ENCODE measurements at regions of chr19 and their contacts with region 1.

Region 1: DNA sequence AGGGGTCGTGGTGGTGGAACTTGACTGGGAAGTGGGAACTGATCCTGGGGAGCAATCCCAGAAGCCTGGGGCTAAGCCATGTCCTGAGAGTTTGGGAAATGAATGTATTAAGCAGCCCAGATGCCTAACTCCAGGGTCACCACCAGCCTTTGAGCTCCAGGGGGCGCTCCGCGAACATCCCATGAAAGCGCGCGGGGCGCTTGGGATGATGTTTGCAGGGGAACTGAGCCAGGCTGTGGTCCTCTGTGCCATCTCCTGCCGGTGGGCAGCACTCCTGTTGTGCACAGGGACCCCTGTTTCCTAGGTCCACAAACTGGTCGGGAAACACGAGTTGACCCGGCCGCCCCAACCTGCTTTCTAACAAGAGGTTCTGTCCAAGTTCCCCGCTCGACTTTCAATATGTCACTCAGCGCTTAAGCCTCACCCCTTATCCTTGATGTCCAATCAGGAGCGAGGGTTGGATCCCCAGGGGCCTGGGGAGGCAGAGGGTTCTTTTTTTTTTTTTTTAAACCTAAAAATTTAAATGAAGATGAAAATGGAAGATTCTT is 14.4 kb downstream of the LEUTX start:
- DNase-seq: peak; percentile 73 to 78
- ATAC-seq: peak; percentile 95 to 99 (median 98)
- H3K4me3 ChIP-seq: peak overlapping the region in 9 of 10 donors; percentile 28 to 61 (median 55)
- H3K27ac ChIP-seq: no peak overlapping the region
- H3K4me1 ChIP-seq: no peaks in the 10 kb centered on the region
- H3K27me3 ChIP-seq: peaks cover 0 to 12% (median 0%) of the 10 kb centered on the region in 7 donors
- CTCF ChIP-seq: peak; percentile 79 to 97 (median 93)

Region 2: DNA sequence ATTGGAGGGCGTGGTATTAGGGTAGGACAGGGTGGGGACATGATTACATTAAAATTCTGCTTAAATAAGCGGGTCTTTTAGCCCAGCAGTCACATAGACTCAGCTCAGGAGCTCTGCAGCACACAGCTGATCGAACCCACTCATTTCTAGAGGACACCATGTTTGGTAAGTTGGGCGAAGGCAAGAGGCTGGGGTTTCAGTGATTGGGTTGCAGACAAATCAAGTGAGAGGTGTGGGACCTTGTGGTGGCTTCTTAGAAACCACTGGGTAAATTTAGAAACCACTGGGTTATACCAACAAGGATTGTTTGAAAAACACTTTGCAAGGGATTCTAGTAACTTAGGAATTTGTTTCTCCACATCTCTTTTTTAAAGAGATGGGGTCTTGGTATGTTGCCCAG is 14.3 kb before region 1 on chr19 and contains the start of gene LEUTX:
- intact Hi-C with region 1: no loop called
- DNase-seq: no peak
- ATAC-seq: no peak
- H3K4me3 ChIP-seq: no peak within 1 kb of the TSS
- H3K27ac ChIP-seq: no peak within 1 kb of the TSS
- H3K4me1 ChIP-seq: no peaks in the 10 kb centered on the region
- H3K27me3 ChIP-seq: peaks cover 0 to 20% (median 10%) of the 10 kb centered on the region in 7 donors
- CTCF ChIP-seq: no peak
- total RNA-seq, gene LEUTX: not detected

Region 3: GRCh38 chr19:39846176-39846677 is 53.2 kb after region 1 on chr19 and contains the start of gene FBL:
- intact Hi-C with region 1: loop called (anchors 1 to 5 kb)
- DNase-seq: peak; percentile 94 to 99
- ATAC-seq: peak; percentile 97 to 99 (median 98)
- H3K4me3 ChIP-seq: peak within 1 kb of the TSS; percentile 53 to 97 (median 78)
- H3K27ac ChIP-seq: peak within 1 kb of the TSS; percentile 49 to 91 (median 84)
- H3K4me1 ChIP-seq: peaks cover 4 to 54% (median 46%) of the 10 kb centered on the region in 9 donors
- H3K27me3 ChIP-seq: no peaks in the 10 kb centered on the region
- CTCF ChIP-seq: no peak
- total RNA-seq, gene FBL: 52.7 to 95.4 (median 67.4) TPM

Region 4: DNA sequence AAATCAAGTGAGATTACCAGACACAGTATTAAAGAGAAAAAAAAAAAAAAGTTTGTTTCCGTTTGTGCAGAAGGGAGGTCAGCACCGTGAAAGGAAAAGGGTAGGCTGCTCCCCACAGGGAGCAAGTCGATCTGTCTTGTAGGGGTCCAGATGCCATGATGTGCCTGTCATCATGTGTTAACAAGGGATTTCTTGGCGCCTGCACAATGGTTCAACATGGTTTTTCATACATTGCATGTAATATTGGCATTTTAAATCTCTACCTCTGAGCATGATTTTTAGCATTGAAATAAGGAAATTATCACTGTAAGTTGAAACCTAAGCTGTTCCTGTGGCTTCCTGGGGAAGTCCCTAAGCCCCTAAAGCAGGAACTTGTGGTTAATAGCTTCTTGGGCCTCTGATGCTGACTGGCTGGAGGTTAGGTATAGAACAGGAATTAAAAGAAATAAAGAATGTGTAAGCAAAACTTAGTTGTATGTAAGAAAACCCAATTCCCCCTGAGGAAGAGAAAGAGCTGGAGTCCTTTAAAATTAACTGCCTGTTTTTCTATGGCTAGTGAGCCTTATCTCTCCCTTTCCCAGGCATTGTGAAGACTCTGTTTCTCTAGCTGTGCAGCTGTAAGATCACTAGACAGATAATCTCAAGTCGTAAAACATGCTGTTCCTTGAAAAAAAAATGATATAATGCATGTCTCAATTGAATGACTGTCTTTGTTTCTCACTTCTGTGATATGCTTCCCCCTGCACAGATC is 148.7 kb after region 1 on chr19:
- intact Hi-C with region 1: no loop called
- DNase-seq: peak in 1 of 2 donors; percentile 14
- ATAC-seq: peak in 6 of 8 donors; percentile 57 to 76 (median 69)
- H3K4me3 ChIP-seq: peak overlapping the region in 1 of 10 donors; percentile 0
- H3K27ac ChIP-seq: peak overlapping the region in 3 of 10 donors; percentile 7 to 69 (median 33)
- H3K4me1 ChIP-seq: peaks cover 0 to 70% (median 0%) of the 10 kb centered on the region in 9 donors
- H3K27me3 ChIP-seq: peaks cover 0 to 51% (median 3%) of the 10 kb centered on the region in 7 donors
- CTCF ChIP-seq: no peak

Region 5: DNA sequence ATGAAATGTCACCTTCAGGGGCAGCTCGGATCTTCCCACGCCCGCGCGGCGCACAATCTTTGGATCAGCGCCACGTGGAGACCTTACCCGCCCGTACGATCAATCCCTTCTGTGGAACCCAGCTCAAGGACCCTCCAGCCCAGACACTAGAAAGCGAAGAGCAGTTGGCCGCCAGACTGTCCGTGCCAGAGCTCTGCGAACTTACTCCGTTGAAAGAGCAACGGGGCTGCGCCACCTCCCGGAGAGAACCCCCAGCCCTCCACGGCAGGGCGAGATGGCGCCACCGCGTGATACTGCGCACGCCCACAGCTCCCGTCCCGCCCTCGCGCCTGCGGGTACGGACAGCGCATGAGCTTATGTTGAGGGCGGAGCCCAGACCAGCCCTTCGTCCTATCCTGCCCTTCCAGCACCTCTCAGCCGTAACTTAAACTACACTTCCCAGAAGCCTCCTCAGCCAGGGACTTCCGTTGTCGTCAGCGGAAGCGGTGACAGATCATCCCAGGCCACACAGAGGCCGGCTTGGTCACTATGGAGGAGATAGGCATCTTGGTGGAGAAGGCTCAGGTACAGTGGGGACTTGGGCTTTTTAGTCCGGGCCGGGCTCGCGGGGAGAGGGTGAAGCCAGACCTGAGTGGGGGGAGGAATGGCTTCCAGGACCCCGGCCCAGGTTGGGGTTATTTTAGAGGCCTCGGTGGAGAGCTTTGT is 177.8 kb after region 1 on chr19 and contains the start of gene PSMC4:
- intact Hi-C with region 1: loop called in 8 of 10 experiments (anchors 1 to 10 kb)
- DNase-seq: peak; percentile 97 to 98
- ATAC-seq: peak; percentile 99 to 100 (median 100)
- H3K4me3 ChIP-seq: peak within 1 kb of the TSS; percentile 69 to 90 (median 82)
- H3K27ac ChIP-seq: peak within 1 kb of the TSS; percentile 70 to 96 (median 92)
- H3K4me1 ChIP-seq: peaks cover 8 to 33% (median 16%) of the 10 kb centered on the region in 9 donors
- H3K27me3 ChIP-seq: peaks cover 0 to 15% (median 0%) of the 10 kb centered on the region in 7 donors
- CTCF ChIP-seq: peak; percentile 31 to 95 (median 79)
- total RNA-seq, gene PSMC4: 64.1 to 86.5 (median 78.1) TPM

Region 6: DNA sequence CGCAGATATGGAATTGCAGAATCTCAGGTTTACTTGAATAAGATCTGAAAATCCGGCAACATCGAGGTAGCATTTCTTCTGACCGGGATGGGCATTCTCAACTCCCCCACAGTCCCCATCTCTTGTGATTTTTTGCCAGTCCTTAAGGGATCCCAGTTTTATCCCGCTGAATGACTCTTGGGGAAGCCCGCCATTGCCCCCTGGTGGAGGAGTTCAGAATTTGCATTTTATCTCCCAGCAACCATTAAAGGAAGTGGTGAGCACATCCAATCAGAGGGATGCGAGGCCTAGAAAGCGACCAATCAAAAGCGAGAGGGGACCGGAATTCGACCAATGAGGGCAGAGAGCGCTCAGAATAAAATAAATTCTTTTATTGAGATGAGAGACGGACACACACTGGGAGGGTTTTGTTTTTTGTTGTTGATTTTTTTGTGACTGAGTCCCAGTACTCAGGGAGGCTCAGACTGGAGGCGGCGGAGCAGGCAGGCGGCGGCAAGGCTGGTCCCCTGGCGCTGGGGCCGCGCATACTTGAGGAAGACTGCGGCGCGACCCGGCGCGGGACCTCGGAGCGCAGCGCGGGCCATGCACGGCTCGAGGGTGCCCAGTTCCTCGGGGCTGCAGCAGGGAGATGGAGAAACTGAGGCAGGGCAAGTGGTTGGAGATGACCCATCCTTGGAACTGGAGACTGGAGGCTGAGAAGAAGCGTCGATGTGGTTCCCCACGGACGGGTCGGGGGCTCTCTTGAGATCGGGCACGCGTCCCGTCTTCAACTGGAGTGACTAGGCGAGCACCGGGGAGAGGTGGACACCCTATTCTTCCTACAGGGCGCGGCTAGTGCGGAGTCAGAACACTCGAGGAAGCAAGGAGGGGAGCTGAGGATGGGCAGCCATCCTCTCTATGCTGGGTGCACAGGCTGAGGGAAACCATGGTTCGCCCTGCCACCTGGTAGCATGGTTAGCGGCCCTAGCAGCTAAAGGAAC is 429.1 kb after region 1 on chr19:
- intact Hi-C with region 1: loop called in 1 of 10 experiments (anchors 10 kb)
- DNase-seq: peak; percentile 58 to 92
- ATAC-seq: peak; percentile 69 to 91 (median 88)
- H3K4me3 ChIP-seq: no peak overlapping the region
- H3K27ac ChIP-seq: no peak overlapping the region
- H3K4me1 ChIP-seq: peaks cover 10 to 31% (median 18%) of the 10 kb centered on the region in 9 donors
- H3K27me3 ChIP-seq: peaks cover 10 to 92% (median 65%) of the 10 kb centered on the region in 7 donors
- CTCF ChIP-seq: peak; percentile 86 to 95 (median 89)

Measured in heart right ventricle (tissue), 16 donors.